Body of pancreas (tissue), 4 donors: ENCODE measurements at regions of chr10 and their contacts with region 1.

Region 1: DNA sequence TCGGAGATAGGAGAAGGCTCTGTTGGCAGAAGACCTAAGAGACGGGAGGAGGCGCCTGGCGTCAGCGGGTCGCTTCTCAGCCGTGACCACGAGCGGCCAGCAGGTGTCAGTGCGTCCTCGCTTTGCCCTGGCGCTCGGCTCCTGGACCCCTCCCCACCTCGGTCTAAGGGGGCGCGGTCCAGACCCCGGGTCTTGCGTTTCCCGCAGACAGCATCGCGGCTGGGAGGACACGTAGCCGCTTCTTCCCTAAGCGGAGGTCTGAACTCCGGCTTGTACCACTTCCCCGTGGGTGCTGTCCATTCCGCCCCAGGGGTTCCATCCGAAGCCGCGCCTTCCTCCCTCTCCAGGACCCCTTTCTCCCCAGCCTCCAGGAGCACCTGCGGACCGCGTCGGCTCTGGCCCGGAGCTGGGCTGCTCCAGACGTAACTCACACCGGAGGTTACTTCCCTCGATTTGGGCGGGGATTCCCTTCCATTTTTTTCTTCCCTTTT is 593 bp upstream of the ADRA2A start:
- DNase-seq: peak; percentile 66 to 81 (median 73)
- ATAC-seq: peak; percentile 70
- H3K4me3 ChIP-seq: peak overlapping the region; percentile 68 to 73
- H3K27ac ChIP-seq: peak overlapping the region in 3 of 4 donors; percentile 72 to 85 (median 77)
- H3K4me1 ChIP-seq: peaks cover 25% of the 10 kb centered on the region
- H3K27me3 ChIP-seq: peaks cover 0 to 7% of the 10 kb centered on the region in 2 donors
- CTCF ChIP-seq: peak; percentile 66 to 93 (median 88)
- POLR2A ChIP-seq: no peak

Region 2: GRCh38 chr10:110931769-110932381 is 144.4 kb before region 1 on chr10:
- intact Hi-C with region 1: no loop called
- DNase-seq: no peak
- ATAC-seq: no peak
- H3K4me3 ChIP-seq: no peak overlapping the region
- H3K27ac ChIP-seq: peak overlapping the region in 1 of 4 donors; percentile 12
- H3K4me1 ChIP-seq: peaks cover 41% of the 10 kb centered on the region
- H3K27me3 ChIP-seq: no peaks in the 10 kb centered on the region
- CTCF ChIP-seq: no peak
- POLR2A ChIP-seq: no peak

Region 3: GRCh38 chr10:111207500-111207899 is 131.3 kb after region 1 on chr10:
- intact Hi-C with region 1: loop called (anchors 10 kb)
- DNase-seq: peak; percentile 55 to 74 (median 68)
- ATAC-seq: peak; percentile 76
- H3K4me3 ChIP-seq: no peak overlapping the region
- H3K27ac ChIP-seq: no peak overlapping the region
- H3K4me1 ChIP-seq: peaks cover 5% of the 10 kb centered on the region
- H3K27me3 ChIP-seq: no peaks in the 10 kb centered on the region
- CTCF ChIP-seq: peak; percentile 54 to 87 (median 62)
- POLR2A ChIP-seq: no peak

Region 4: DNA sequence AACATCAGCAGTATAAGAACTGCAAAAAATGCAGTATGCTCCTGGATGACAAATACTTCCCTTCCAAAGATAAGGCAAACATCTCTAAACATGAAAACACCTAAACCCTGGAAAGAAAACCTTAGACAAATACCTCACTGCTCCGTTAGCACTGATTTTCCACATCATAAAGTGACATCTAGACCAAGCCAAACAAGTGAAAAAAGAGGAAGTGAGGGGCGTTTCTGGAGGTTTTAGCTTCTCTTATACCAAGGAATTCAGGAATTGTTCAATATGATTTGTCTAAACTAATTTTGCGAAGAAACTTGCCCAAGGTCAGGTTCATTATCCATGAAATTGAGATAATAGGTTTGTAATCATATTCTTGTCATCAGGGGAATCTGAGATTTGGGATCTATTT is 280.3 kb after region 1 on chr10:
- intact Hi-C with region 1: loop called (anchors 10 kb)
- DNase-seq: no peak
- ATAC-seq: no peak
- H3K4me3 ChIP-seq: no peak overlapping the region
- H3K27ac ChIP-seq: no peak overlapping the region
- H3K4me1 ChIP-seq: no peaks in the 10 kb centered on the region
- H3K27me3 ChIP-seq: no peaks in the 10 kb centered on the region
- CTCF ChIP-seq: no peak
- POLR2A ChIP-seq: no peak